AG04450 (cell line): ENCODE measurements at regions of chr3 and their contacts with region 1.

Region 1: GRCh38 chr3:126679318-126679751 is 24.4 kb upstream of the TXNRD3 start:
- DNase-seq: peak; percentile 37
- H3K4me3 ChIP-seq: no peak overlapping the region
- H3K27ac ChIP-seq: no peak overlapping the region
- H3K27me3 ChIP-seq: peaks cover 35% of the 10 kb centered on the region
- CTCF ChIP-seq: peak; percentile 90

Region 2: GRCh38 chr3:126696701-126697267 is 17.4 kb after region 1 on chr3:
- CTCF ChIA-PET with region 1: interaction called, 12 read pairs
- POLR2A ChIA-PET with region 1: no interaction called
- DNase-seq: no peak
- H3K4me3 ChIP-seq: no peak overlapping the region
- H3K27ac ChIP-seq: no peak overlapping the region
- H3K27me3 ChIP-seq: peaks cover 29% of the 10 kb centered on the region
- CTCF ChIP-seq: no peak

Region 3: DNA sequence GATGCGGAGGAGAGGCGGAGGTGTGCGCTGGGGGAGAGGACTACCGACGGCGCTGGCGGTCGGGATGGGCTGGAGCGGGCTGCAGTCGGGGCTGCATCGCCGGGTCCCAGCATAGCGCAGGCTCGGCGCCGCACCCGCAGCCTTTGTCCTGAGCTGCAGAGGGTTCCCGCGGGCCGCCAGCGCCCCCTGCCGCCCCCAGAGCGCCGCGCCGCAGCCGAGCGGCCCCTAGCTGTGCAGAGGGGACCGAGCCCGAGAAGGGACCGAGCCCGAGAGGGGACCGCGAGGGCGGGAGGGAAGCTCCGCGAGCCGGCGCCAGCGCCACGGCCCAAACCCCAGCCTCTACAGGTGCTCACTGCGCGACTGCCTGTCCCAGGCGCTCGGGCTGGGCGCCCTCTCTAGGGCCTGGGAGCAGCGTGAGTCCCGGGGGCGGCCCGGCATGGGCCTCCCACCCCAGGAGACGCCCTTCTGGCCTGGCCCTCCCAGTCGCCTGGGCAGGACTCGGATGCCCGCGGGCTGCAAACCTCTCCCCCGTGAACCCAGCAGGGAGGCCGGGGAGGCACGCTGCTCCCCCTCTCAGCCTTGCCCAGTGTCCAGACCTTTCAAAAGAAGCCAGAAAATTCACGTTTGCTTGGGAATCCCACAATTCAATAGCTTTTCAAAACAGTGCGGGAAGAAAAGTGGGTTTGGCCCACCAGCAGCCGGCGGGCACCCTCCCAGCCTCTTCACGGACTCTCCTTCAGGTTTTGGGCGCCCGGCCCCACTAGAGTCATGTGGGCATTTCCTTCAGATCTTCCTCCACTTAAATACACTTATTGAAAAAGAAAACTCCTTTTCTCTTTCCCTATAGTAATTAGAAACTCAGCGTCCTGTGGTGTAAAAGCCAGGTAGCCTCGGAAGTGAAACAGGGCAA is 776.5 kb after region 1 on chr3:
- CTCF ChIA-PET with region 1: interaction called, 20 read pairs
- POLR2A ChIA-PET with region 1: interaction called, 3 read pairs
- DNase-seq: no peak
- H3K4me3 ChIP-seq: peak overlapping the region; percentile 48
- H3K27ac ChIP-seq: no peak overlapping the region
- H3K27me3 ChIP-seq: peaks cover 45% of the 10 kb centered on the region
- CTCF ChIP-seq: peak; percentile 75

Region 4: GRCh38 chr3:127544192-127544802 is 865.0 kb after region 1 on chr3:
- CTCF ChIA-PET with region 1: interaction called, 21 read pairs
- POLR2A ChIA-PET with region 1: no interaction called
- DNase-seq: peak; percentile 6
- H3K4me3 ChIP-seq: no peak overlapping the region
- H3K27ac ChIP-seq: no peak overlapping the region
- H3K27me3 ChIP-seq: peaks cover 35% of the 10 kb centered on the region
- CTCF ChIP-seq: peak; percentile 76